Prostate gland (tissue), 2 donors: ENCODE measurements at regions of chr11 and their contacts with region 1.

Region 1: DNA sequence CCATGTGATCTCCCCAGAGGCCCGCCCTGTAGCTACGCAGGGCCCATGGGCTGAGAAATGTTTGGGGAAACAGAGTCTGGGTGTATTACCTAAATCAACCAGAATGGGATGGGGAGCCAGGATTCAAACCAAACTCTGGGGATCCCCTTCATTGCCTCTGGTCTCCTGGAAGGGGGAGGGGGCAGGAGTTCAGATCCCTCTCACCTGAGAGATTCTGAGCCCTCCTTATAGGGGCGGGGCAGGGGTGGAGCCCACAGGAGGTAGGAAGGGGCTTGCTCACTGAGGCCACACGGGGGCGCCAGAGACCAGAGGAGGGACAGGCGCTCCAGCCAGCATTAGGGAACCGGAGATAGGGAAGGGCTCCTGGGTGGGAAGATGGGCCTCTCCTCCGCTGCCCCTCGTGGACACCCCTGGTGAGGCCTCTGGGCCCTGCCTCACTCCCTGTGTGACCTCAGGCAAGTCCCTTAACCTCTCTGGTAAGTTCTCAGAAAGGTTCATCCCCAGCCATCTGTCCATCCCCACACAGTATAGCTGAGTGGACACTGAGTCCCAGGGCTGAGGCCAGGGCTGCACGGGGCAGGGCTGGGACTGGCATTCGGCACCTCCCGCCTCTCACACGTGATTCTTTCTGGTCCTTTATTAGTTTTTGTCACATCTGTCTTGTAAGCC is 2.7 kb upstream of the CDC42BPG start:
- DNase-seq: peak; percentile 86
- H3K4me3 ChIP-seq: no peak overlapping the region
- H3K27ac ChIP-seq: no peak overlapping the region
- H3K4me1 ChIP-seq: peaks cover 4% of the 10 kb centered on the region
- H3K27me3 ChIP-seq: no peaks in the 10 kb centered on the region
- CTCF ChIP-seq: peak; percentile 89 to 99 (median 97)
- POLR2A ChIP-seq: no peak

Region 2: DNA sequence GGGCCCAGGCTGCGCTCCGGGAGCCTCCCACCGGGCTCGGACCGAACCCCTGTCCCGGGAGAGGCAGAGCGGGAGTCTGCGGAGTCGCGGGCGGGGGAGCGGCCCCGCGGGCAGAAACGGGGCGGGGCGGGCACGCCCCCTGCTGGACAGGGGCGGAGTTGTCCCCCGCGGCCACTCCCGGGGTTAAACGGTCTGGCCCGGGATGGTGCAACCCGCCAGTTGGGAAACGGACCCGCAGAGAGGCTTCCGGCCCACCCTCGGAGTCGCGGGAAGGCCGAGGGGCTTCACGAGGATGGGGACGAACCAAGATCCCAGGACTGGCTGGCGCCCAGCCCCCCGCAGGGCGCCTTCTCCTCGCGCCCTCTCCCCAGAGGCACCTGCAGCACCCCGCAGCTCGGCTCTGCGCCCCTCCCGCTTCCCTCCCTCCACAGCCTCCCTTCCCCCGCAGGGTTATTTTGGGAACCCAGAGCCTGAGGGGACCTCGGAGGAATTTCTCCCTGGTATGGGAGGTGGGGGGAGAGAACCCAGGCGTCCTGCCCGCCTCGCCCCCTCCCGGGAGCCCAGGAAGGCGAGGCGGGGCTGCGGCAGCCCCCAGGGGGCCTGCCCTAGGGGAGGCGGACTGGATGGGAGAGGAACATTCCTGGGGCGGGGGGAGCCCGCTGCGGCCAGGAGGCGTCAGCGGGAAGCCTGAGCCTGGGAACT is 104.1 kb before region 1 on chr11:
- intact Hi-C with region 1: no loop called
- DNase-seq: no peak
- H3K4me3 ChIP-seq: peak overlapping the region; percentile 40 to 45
- H3K27ac ChIP-seq: peak overlapping the region; percentile 52 to 83
- H3K4me1 ChIP-seq: peaks cover 7% of the 10 kb centered on the region
- H3K27me3 ChIP-seq: no peaks in the 10 kb centered on the region
- CTCF ChIP-seq: peak; percentile 69 to 81 (median 74)
- POLR2A ChIP-seq: no peak

Region 3: GRCh38 chr11:64767344-64768299 is 79.5 kb before region 1 on chr11:
- intact Hi-C with region 1: no loop called
- DNase-seq: no peak
- H3K4me3 ChIP-seq: no peak overlapping the region
- H3K27ac ChIP-seq: peak overlapping the region in 1 of 2 donors; percentile 8
- H3K4me1 ChIP-seq: peaks cover 6% of the 10 kb centered on the region
- H3K27me3 ChIP-seq: no peaks in the 10 kb centered on the region
- CTCF ChIP-seq: peak; percentile 48 to 76 (median 64)
- POLR2A ChIP-seq: no peak

Region 4: DNA sequence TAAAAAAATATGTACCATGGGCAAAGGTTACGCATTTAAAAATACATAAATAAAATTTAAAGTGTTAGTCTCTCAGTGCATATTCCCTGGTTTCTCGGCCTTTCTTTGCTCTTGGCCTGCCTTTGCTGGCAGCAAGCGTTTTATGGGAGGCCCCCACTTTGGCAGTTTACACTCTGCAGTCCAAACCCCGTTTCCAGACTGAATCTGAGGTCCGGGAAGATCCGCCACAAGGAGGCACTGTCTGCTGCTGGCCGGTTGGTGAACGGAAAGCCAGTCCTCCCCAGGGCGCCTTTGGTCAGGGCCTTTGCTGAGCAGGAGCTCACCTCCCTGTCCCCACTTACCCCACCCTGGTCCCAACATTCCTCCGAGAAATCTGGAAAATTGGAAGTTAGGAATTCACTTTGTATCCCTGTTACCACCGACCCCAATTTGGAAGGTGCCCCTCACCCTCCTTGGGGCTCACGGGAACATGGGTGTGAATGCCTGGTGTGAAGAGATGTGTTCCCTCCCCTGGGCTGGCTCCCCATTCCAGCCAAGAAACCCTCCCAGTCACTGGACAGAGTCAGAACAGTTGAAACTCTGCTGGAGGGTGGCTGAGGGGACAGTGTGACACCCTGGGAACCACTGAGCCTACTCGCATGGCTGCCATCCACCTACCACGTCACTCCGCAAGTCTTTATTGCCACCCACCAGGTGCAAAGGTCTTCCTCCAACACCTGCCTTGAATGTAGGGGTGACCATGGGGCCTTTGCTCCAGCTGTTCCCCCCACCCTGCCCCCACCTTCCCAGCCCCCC is 59.4 kb before region 1 on chr11:
- intact Hi-C with region 1: no loop called
- DNase-seq: peak; percentile 50
- H3K4me3 ChIP-seq: no peak overlapping the region
- H3K27ac ChIP-seq: no peak overlapping the region
- H3K4me1 ChIP-seq: no peaks in the 10 kb centered on the region
- H3K27me3 ChIP-seq: no peaks in the 10 kb centered on the region
- CTCF ChIP-seq: peak; percentile 31 to 70 (median 56)
- POLR2A ChIP-seq: no peak

Region 5: DNA sequence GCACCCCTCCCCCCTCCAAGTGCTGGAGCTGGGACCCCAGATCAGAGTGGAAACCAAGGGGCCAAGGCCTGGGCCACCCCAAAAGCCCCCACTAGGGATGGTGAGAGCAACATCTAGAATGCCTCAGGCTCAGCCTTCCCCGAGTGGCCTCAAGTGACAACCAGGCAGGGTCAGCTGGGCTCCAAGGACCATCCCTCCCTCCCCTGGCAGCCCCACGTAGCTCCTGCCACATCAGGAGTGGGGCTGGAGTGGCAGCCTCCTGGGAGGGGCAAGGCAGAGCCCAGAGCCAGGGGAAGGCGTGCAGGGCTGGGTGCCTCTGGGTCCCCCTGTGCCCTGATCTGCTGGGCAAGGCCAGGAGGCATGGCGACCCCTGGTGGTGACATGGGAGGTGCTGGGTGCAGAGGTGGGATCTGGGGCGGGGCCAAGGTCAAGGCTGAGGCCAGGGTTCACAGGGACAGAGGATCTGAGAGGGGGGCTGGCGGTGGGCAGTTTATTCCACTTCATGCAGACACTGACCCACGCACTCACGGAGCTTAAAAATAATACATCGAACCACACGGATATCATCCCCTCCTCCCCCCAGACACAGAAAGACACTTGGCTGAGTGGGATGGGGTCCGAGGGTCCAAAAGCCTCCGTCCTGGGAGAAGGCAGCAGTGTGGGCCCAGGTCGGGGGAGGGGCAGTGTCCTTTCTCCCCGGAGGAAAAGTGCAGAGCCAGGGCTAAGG is 47.1 kb after region 1 on chr11:
- intact Hi-C with region 1: loop called (anchors 1 kb)
- DNase-seq: peak; percentile 66
- H3K4me3 ChIP-seq: no peak overlapping the region
- H3K27ac ChIP-seq: no peak overlapping the region
- H3K4me1 ChIP-seq: no peaks in the 10 kb centered on the region
- H3K27me3 ChIP-seq: no peaks in the 10 kb centered on the region
- CTCF ChIP-seq: peak; percentile 72 to 89 (median 79)
- POLR2A ChIP-seq: no peak

Region 6: GRCh38 chr11:64996710-64997380 is 149.7 kb after region 1 on chr11 and contains the start of gene BATF2:
- intact Hi-C with region 1: loop called (anchors 5 kb)
- DNase-seq: peak; percentile 50
- H3K4me3 ChIP-seq: peak within 1 kb of the TSS; percentile 24 to 26
- H3K27ac ChIP-seq: peak within 1 kb of the TSS; percentile 39 to 45
- H3K4me1 ChIP-seq: no peaks in the 10 kb centered on the region
- H3K27me3 ChIP-seq: no peaks in the 10 kb centered on the region
- CTCF ChIP-seq: peak in 2 of 4 experiments; percentile 51 to 71
- POLR2A ChIP-seq: peak; percentile 33
- total RNA-seq, gene BATF2: 1.5 TPM

Region 7: GRCh38 chr11:65251476-65251875 is 404.3 kb after region 1 on chr11:
- intact Hi-C with region 1: no loop called
- DNase-seq: peak; percentile 16
- H3K4me3 ChIP-seq: no peak overlapping the region
- H3K27ac ChIP-seq: no peak overlapping the region
- H3K4me1 ChIP-seq: no peaks in the 10 kb centered on the region
- H3K27me3 ChIP-seq: no peaks in the 10 kb centered on the region
- CTCF ChIP-seq: no peak
- POLR2A ChIP-seq: no peak